ENCODE measurements at regions of chr22 and their contacts with region 1.

Region 1: DNA sequence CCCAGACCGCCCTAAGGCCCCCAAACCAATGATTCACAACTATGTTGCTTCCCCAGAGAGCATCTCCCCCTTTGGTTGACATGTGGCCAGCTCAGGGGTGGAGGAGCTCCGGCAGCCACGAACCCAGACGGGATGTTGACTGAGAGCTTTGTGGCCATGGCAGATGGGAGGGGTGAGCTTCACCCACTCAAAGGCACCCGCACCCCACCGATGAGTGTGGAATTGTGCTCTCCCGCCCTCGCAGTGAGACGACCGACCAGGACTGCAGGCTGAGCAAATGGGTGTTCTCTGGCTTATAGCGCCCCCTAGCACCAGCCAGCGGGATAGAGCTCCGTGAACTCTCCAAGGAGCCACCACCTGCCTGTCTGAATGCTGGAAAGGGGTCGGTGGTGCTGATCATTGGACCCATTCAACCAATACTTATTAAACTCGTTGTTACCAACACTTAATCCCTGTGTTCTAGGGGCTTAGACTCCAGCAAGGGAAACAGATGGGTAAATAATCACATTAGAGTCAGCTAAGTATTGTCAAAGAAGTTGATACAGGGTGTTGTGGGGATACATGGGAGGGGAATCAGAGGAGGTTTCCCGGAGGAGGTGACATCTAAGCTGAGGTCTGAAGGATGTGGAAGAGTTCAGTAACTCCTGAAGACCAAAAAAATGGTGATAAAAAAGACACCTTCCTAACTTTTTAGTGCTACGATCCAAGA is 4.5 kb upstream of the TIMP3 start:
- DNase-seq: peak; percentile 67
- H3K4me3 Mint-ChIP-seq: no peak overlapping the region
- H3K27ac Mint-ChIP-seq: no peak overlapping the region
- H3K4me1 Mint-ChIP-seq: peaks cover 2% of the 10 kb centered on the region
- H3K27me3 Mint-ChIP-seq: peaks cover 35% of the 10 kb centered on the region

Region 2: DNA sequence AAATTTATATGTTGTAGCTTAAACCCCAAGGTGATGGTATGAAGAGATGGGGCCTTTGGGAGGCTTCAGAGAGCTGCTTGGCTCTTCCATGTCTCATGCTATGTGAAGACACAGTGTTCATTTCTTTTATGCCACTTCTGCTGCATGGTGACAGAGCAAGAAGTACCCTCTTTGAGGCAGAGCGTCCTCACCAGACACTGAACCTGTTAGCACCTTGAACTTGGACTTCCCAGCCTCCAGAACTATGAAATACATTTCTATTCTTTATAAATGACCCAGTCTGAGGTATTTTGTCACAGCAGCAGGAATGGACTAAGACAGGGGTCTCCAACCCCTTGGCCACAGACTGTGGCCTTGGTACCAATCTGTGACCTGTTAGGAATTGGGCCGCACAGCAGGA is 142.0 kb before region 1 on chr22:
- CTCF ChIA-PET with region 1: interaction called, 110 read pairs
- POLR2A ChIA-PET with region 1: no interaction called
- intact Hi-C with region 1: loop called (anchors 1 kb)
- DNase-seq: no peak
- H3K4me3 Mint-ChIP-seq: no peak overlapping the region
- H3K27ac Mint-ChIP-seq: no peak overlapping the region
- H3K4me1 Mint-ChIP-seq: peaks cover 3% of the 10 kb centered on the region
- H3K27me3 Mint-ChIP-seq: peaks cover 13% of the 10 kb centered on the region

Region 3: GRCh38 chr22:32810561-32811004 is 13.6 kb after region 1 on chr22:
- CTCF ChIA-PET with region 1: interaction called, 13 read pairs
- POLR2A ChIA-PET with region 1: no interaction called
- intact Hi-C with region 1: no loop called
- DNase-seq: no peak
- H3K4me3 Mint-ChIP-seq: no peak overlapping the region
- H3K27ac Mint-ChIP-seq: no peak overlapping the region
- H3K4me1 Mint-ChIP-seq: no peaks in the 10 kb centered on the region
- H3K27me3 Mint-ChIP-seq: peaks cover 20% of the 10 kb centered on the region